ENCODE measurements at regions of chr1 and their contacts with region 1.

Region 1: GRCh38 chr1:15100121-15100874 is 53.2 kb upstream of the TMEM51 start:
- DNase-seq: peak; percentile 14
- H3K4me3 ChIP-seq: no peak overlapping the region
- H3K27ac ChIP-seq: no peak overlapping the region
- H3K4me1 ChIP-seq: no peaks in the 10 kb centered on the region
- H3K27me3 ChIP-seq: no peaks in the 10 kb centered on the region
- CTCF ChIP-seq: peak; percentile 98

Region 2: GRCh38 chr1:14108356-14109275 is 991.7 kb before region 1 on chr1:
- CTCF ChIA-PET with region 1: no interaction called
- dilution Hi-C with region 1: no loop called
- in situ Hi-C with region 1: loop called in 1 of 2 experiments (anchors 10 kb)
- intact Hi-C with region 1: no loop called
- DNase-seq: peak; percentile 8
- H3K4me3 ChIP-seq: no peak overlapping the region
- H3K27ac ChIP-seq: no peak overlapping the region
- H3K4me1 ChIP-seq: no peaks in the 10 kb centered on the region
- H3K27me3 ChIP-seq: no peaks in the 10 kb centered on the region
- CTCF ChIP-seq: no peak

Region 3: DNA sequence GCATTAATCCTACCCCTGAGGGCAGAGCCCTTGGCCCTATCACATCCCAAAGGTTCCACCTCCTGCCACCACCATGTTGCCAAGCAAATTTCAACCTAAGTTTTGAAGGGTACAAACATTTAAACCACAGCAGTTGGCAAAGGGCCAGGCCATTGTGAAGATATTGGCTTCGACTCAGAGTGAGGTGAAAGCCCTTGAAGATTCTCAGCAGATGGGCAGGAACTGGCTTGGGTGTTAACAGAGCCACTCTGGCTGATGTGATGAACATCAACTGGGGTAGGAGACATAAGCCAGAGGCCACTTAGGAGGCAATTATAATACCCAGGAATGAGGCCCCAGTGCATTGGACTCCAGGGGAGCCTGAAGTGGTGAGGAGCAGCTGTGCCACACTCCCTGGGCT is 709.5 kb before region 1 on chr1:
- CTCF ChIA-PET with region 1: no interaction called
- dilution Hi-C with region 1: no loop called
- in situ Hi-C with region 1: no loop called
- intact Hi-C with region 1: no loop called
- DNase-seq: no peak
- H3K4me3 ChIP-seq: no peak overlapping the region
- H3K27ac ChIP-seq: no peak overlapping the region
- H3K4me1 ChIP-seq: no peaks in the 10 kb centered on the region
- H3K27me3 ChIP-seq: no peaks in the 10 kb centered on the region
- CTCF ChIP-seq: no peak

Region 4: GRCh38 chr1:14567056-14567455 is 533.2 kb before region 1 on chr1:
- CTCF ChIA-PET with region 1: no interaction called
- dilution Hi-C with region 1: no loop called
- in situ Hi-C with region 1: no loop called
- intact Hi-C with region 1: loop called (anchors 1 kb)
- DNase-seq: peak; percentile 12
- H3K4me3 ChIP-seq: no peak overlapping the region
- H3K27ac ChIP-seq: no peak overlapping the region
- H3K4me1 ChIP-seq: no peaks in the 10 kb centered on the region
- H3K27me3 ChIP-seq: no peaks in the 10 kb centered on the region
- CTCF ChIP-seq: peak; percentile 25 to 45

Region 5: GRCh38 chr1:14606632-14607031 is 493.7 kb before region 1 on chr1:
- CTCF ChIA-PET with region 1: no interaction called
- dilution Hi-C with region 1: no loop called
- in situ Hi-C with region 1: no loop called
- intact Hi-C with region 1: loop called (anchors 1 kb)
- DNase-seq: no peak
- H3K4me3 ChIP-seq: no peak overlapping the region
- H3K27ac ChIP-seq: no peak overlapping the region
- H3K4me1 ChIP-seq: no peaks in the 10 kb centered on the region
- H3K27me3 ChIP-seq: no peaks in the 10 kb centered on the region
- CTCF ChIP-seq: peak; percentile 49 to 89

Region 6: GRCh38 chr1:14778898-14779865 is 321.1 kb before region 1 on chr1:
- CTCF ChIA-PET with region 1: no interaction called
- dilution Hi-C with region 1: no loop called
- in situ Hi-C with region 1: no loop called
- intact Hi-C with region 1: loop called (anchors 1 kb)
- DNase-seq: no peak
- H3K4me3 ChIP-seq: no peak overlapping the region
- H3K27ac ChIP-seq: no peak overlapping the region
- H3K4me1 ChIP-seq: no peaks in the 10 kb centered on the region
- H3K27me3 ChIP-seq: no peaks in the 10 kb centered on the region
- CTCF ChIP-seq: peak; percentile 72 to 78

Region 7: DNA sequence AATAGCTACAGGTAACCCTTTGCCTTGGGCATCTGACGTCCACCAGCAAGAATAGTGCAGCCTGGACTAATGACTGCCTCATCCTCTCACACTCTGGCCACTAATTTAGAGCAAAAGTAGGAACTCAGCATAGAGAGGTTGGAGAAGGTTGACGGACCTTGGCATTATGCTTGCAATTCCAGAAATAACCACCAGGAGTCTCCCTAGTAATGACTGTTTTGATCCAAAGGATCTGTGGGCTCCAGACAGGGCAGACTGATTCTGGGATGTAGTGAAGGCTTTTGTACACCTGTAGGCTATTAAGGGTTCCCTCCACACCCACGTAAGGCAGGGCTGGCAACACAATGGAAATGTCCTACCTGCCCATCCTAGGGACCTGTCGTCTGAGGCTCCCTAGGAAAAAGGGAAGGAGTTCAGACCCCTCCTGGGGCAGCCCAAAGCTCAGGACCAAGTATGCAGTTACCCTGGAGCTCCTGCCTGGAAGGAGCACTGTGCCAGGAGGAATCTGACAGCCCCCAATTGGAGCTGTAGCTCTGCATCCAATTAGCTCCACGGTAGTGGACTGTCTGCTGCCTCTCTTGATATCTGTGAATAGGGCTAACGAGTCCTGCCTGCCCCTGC is 37.7 kb before region 1 on chr1:
- CTCF ChIA-PET with region 1: no interaction called
- dilution Hi-C with region 1: no loop called
- in situ Hi-C with region 1: no loop called
- intact Hi-C with region 1: loop called (anchors 5 kb)
- DNase-seq: no peak
- H3K4me3 ChIP-seq: no peak overlapping the region
- H3K27ac ChIP-seq: no peak overlapping the region
- H3K4me1 ChIP-seq: peaks cover 6% of the 10 kb centered on the region
- H3K27me3 ChIP-seq: no peaks in the 10 kb centered on the region
- CTCF ChIP-seq: peak; percentile 52 to 55

Region 8: GRCh38 chr1:15168479-15168878 is 68.2 kb after region 1 on chr1:
- CTCF ChIA-PET with region 1: no interaction called
- dilution Hi-C with region 1: no loop called
- in situ Hi-C with region 1: no loop called
- intact Hi-C with region 1: no loop called
- DNase-seq: peak; percentile 99
- H3K4me3 ChIP-seq: no peak overlapping the region
- H3K27ac ChIP-seq: peak overlapping the region; percentile 91
- H3K4me1 ChIP-seq: peaks cover 33% of the 10 kb centered on the region
- H3K27me3 ChIP-seq: no peaks in the 10 kb centered on the region
- CTCF ChIP-seq: peak; percentile 19 to 25